ENCODE measurements at regions of chr19 and their contacts with region 1.

Region 1: GRCh38 chr19:46076951-46077816 is 36.4 kb upstream of the IGFL4 start:
- DNase-seq: peak in 1 of 3 donors; percentile 42
- ATAC-seq: peak; percentile 74 to 89 (median 86)
- H3K4me3 ChIP-seq: peak overlapping the region in 1 of 3 donors; percentile 17
- H3K27ac ChIP-seq: no peak overlapping the region
- H3K4me1 ChIP-seq: peaks cover 0 to 5% (median 0%) of the 10 kb centered on the region in 4 donors
- H3K27me3 ChIP-seq: peaks cover 0 to 18% of the 10 kb centered on the region in 2 donors
- CTCF ChIP-seq: peak; percentile 67 to 82 (median 70)
- POLR2A ChIP-seq: no peak

Region 2: GRCh38 chr19:46021531-46022041 is 55.6 kb before region 1 on chr19:
- intact Hi-C with region 1: loop called in 1 of 2 experiments (anchors 10 kb)
- DNase-seq: peak in 1 of 3 donors; percentile 52
- ATAC-seq: no peak
- H3K4me3 ChIP-seq: no peak overlapping the region
- H3K27ac ChIP-seq: no peak overlapping the region
- H3K4me1 ChIP-seq: no peaks in the 10 kb centered on the region
- H3K27me3 ChIP-seq: peaks cover 0 to 6% of the 10 kb centered on the region in 2 donors
- CTCF ChIP-seq: no peak
- POLR2A ChIP-seq: no peak

Region 3: GRCh38 chr19:46181388-46181779 is 104.2 kb after region 1 on chr19:
- intact Hi-C with region 1: loop called (anchors 5 to 10 kb)
- DNase-seq: no peak
- ATAC-seq: no peak
- H3K4me3 ChIP-seq: no peak overlapping the region
- H3K27ac ChIP-seq: no peak overlapping the region
- H3K4me1 ChIP-seq: no peaks in the 10 kb centered on the region
- H3K27me3 ChIP-seq: no peaks in the 10 kb centered on the region
- CTCF ChIP-seq: no peak
- POLR2A ChIP-seq: no peak

Region 4: DNA sequence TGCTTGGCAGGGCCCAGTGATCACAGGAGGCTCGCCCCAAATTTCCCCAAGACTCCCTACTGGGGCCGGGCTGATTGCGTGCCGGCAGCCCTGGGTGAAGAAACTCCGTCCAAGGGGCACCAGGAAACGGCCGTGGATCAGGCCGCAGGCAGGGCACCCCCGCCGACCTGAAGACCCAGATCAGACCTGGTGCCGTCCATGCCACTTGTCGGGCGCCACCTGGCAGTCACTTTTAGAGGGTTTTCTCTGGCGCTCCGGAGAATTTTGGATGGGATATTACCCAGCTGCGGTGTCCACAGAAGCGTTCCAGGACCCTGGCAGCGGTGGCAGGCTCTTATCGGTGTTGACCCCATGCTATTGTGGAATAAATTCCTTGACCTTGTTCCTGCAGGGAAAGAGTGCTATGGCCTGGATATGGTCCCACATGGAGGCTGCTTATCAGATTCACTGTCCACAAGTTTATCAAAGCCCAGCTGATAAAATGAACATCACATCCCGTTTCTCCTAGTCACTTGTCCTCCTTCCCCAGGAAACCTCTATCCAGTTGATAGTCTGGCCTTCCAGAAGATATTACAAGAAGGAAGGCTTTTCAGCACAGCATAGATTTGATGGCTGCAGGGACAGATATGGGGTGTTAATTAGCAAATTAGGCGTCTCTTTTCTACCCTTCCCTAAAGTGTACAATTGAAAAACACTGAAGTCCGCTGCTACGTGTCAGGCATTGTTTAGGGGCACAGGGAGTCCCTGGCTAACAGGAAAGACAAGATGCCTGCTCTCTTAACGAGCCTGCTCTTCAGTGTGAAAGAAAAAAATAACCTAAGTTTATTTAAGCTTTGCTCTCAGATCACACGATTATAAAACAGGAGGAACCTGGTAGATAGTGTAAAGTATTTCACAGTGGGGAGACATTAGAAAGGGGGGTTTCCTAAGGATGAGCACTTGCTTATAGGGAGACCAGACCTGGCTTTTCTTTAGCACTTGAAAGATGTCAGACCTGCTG is 109.2 kb after region 1 on chr19:
- intact Hi-C with region 1: loop called (anchors 5 to 10 kb)
- DNase-seq: no peak
- ATAC-seq: peak in 1 of 4 donors; percentile 2
- H3K4me3 ChIP-seq: no peak overlapping the region
- H3K27ac ChIP-seq: no peak overlapping the region
- H3K4me1 ChIP-seq: peaks cover 0 to 12% (median 2%) of the 10 kb centered on the region in 4 donors
- H3K27me3 ChIP-seq: no peaks in the 10 kb centered on the region
- CTCF ChIP-seq: no peak
- POLR2A ChIP-seq: no peak

Region 5: GRCh38 chr19:46265217-46265828 is 188.1 kb after region 1 on chr19:
- intact Hi-C with region 1: loop called (anchors 5 kb)
- DNase-seq: peak in 1 of 3 donors; percentile 63
- ATAC-seq: peak; percentile 94 to 99 (median 96)
- H3K4me3 ChIP-seq: no peak overlapping the region
- H3K27ac ChIP-seq: no peak overlapping the region
- H3K4me1 ChIP-seq: no peaks in the 10 kb centered on the region
- H3K27me3 ChIP-seq: no peaks in the 10 kb centered on the region
- CTCF ChIP-seq: peak; percentile 80 to 95 (median 89)
- POLR2A ChIP-seq: no peak